Common myeloid progenitor, CD34-positive (primary cell): ENCODE measurements at regions of chr2 and their contacts with region 1.

Region 1: DNA sequence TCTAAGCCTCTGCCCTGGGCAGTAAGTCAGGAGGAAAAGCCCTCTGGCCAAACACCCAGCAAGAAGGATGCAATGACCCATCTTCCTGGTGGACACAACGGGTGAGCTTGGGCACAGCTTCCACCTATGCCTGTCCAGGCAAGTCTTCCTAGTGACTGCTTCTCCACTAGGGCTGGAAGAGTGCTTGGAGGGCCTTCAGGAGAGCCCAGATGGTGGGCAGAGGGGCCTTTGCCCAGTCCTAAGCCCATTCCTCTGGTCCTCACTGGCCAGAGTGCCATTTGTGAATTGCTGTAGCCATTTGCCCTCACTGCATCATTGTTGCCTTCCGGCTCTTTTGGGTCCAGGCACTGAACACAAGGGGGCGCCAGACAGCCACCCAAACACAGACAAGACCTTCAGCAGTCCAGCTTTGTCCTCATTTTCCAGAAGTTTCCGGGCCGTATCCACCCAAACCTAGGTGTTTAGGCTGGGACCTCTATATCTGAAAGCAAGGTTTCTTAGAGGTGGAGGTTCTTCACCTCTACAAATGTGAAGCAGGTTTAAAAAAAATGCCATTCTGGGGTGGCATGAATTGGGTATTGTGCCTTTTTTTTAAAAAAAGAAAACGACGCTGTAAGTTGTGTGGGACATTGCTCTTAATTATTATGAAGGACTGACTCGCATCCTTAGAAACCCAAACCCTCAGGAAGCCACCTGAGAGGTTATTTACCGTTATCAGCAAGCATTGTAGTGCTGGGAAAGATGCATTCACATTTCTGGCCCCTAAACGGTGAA is 29.5 kb downstream of the PAX8 start:
- DNase-seq: peak; percentile 69 to 79 (median 75)
- H3K4me3 ChIP-seq: no peak overlapping the region
- H3K27ac ChIP-seq: no peak overlapping the region
- H3K4me1 ChIP-seq: peaks cover 3 to 53% (median 18%) of the 10 kb centered on the region in 4 experiments
- H3K27me3 ChIP-seq: no peaks in the 10 kb centered on the region

Region 2: DNA sequence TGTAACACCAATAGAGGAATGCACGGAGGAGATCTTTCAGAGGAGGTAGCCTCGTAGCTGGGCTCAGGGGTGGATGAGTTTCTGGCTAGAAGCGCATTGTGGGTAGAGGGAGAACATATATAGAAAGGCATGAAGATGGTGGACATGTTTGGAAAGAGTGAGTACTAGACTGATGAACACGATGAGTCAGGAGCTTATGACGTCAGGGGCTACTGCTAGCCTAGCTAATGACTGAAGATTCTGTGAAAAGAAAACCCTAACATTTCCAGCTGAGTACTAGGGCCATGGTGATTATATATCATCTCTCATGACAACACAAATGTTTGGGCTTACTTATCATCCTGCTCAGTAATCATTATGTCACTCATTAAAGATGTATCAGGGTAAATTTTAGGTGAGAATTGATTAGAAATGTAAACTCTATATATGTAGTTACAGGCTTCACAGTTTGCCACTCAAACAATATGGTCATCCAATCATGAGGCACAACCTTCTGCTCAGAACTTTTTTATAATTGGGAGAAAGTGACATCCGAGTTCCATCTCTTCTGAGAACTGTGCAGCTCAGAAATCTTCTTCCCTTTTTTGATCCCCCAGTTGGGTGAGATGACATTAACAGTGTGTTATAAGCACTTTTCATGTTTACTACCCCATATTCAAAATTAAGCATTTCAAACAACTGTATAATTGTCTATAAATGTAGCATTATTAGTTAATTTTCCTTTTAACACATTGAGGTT is 144.0 kb before region 1 on chr2:
- CTCF ChIA-PET with region 1: no interaction called
- POLR2A ChIA-PET with region 1: no interaction called
- DNase-seq: no peak
- H3K4me3 ChIP-seq: no peak overlapping the region
- H3K27ac ChIP-seq: no peak overlapping the region
- H3K4me1 ChIP-seq: peaks cover 0 to 2% (median 0%) of the 10 kb centered on the region in 4 experiments
- H3K27me3 ChIP-seq: no peaks in the 10 kb centered on the region

Region 3: DNA sequence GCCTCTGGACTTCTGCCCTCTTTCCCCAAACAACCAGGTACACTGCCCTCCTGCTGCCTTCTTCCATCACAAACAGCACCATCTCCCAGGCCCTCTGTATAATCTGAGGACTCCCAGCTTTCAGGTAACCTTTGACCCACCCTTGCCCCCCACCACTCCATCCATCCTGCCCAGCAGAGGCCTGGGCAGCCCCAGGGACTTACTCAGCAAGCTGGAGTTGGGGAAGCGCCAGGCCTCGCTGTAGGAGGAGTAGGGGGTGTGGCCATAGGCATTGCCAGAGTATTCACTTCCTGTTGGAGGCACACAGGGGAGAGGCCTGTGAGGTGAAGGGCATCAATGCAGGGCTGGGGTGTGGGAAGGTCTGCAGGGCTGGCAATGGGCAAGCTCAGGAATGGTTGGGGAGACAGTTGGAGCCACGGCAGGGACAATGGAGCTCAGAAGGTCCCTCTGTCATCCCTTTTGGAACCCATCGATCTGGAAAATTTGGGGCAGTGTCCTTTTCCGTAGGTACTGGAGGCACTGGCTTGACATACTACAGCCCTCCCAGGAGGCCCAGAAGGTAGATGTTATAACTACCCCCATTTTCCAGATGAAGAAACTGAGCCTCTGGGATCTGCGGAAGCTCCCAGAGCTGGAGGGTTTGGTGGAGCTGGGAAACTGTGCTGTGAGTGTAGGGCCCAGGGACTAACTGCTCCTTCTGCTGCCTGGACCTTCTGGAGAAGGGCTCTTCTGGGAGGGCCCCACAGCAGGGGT is 29.1 kb before region 1 on chr2:
- CTCF ChIA-PET with region 1: interaction called, 28 read pairs
- POLR2A ChIA-PET with region 1: no interaction called
- DNase-seq: peak in 2 of 3 donors; percentile 50 to 54
- H3K4me3 ChIP-seq: no peak overlapping the region
- H3K27ac ChIP-seq: no peak overlapping the region
- H3K4me1 ChIP-seq: peaks cover 17 to 64% (median 58%) of the 10 kb centered on the region in 4 experiments
- H3K27me3 ChIP-seq: no peaks in the 10 kb centered on the region

Region 4: DNA sequence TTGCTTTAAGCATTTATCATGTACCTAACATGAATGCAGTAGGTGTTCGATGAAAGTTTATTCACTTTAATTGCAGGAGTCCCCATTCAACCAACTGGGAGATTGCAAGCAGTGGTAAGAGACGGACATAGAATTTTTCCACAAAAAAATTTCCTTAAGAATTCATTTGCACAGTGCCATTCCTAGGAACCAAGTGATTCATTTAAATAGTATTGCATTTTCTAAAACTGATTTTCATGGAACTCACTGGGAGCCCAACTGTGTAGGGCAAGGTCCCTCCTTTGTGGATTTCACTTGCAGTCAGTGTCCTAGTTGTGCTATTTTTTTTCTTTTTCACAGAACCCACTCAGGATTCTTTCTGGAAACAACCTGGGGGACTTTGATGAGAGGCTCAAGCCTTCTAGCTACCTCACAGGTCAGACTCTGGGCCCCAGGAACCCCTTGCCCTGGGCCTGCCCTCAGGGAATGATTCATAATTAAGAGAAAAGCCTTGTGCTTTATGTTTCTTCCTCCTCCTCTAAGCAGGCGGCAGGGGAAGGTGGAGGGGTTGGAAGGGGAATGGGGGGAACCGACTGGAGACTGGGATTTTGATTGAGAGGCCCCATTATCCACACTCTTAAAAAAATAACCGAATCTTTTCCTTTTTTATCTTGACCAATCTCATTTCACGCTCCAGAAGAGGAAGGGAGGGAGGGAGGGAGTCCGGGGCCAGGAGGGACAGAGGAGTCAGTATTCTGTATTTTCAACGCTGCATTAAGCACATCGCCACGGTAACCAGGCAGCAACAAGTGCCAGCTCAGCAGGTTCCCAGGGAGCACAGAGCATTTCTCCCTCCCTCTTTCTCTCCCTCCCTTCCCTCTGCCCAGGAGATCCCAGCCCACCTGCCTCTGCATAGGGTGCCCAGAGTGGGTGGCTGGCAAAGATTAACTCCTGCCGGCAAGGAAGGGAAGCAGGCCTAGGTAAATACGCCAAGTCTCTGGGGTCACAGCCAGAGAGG is 23.6 kb before region 1 on chr2:
- CTCF ChIA-PET with region 1: interaction called, 28 read pairs
- POLR2A ChIA-PET with region 1: no interaction called
- DNase-seq: peak in 2 of 3 donors; percentile 57 to 63
- H3K4me3 ChIP-seq: no peak overlapping the region
- H3K27ac ChIP-seq: no peak overlapping the region
- H3K4me1 ChIP-seq: peaks cover 23 to 61% (median 50%) of the 10 kb centered on the region in 4 experiments
- H3K27me3 ChIP-seq: no peaks in the 10 kb centered on the region

Region 5: DNA sequence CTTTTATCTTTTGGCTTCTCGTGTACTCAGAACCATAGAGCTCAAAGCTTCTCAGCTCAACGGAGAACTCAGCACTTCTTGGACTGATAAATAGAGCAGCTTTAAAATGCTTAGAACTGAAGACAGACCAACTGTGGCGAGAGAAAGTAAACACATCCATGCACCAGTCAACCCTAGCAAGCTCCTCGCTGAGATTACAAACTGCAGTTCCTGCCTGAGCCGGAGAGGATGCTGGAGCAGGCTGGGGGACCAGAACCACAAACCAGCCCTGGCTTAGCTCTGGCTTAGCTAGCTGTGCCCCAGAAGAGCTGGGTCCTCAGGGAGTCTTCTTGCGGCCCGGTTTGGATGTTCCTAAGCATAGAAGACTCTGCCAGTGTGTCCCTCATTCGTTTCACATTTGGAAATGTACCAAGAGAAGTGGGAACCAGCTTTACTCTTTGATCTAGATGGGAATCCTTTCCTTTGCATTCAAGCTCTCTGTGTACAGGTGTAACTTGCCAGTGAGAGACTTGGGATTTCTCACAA is 23.9 kb after region 1 on chr2:
- CTCF ChIA-PET with region 1: interaction called, 36 read pairs
- POLR2A ChIA-PET with region 1: no interaction called
- DNase-seq: peak in 2 of 3 donors; percentile 83 to 84
- H3K4me3 ChIP-seq: peak overlapping the region in 2 of 7 experiments; percentile 24 to 43
- H3K27ac ChIP-seq: no peak overlapping the region
- H3K4me1 ChIP-seq: peaks cover 0 to 30% (median 22%) of the 10 kb centered on the region in 4 experiments
- H3K27me3 ChIP-seq: peaks cover 20 to 75% (median 49%) of the 10 kb centered on the region in 5 experiments

Region 6: DNA sequence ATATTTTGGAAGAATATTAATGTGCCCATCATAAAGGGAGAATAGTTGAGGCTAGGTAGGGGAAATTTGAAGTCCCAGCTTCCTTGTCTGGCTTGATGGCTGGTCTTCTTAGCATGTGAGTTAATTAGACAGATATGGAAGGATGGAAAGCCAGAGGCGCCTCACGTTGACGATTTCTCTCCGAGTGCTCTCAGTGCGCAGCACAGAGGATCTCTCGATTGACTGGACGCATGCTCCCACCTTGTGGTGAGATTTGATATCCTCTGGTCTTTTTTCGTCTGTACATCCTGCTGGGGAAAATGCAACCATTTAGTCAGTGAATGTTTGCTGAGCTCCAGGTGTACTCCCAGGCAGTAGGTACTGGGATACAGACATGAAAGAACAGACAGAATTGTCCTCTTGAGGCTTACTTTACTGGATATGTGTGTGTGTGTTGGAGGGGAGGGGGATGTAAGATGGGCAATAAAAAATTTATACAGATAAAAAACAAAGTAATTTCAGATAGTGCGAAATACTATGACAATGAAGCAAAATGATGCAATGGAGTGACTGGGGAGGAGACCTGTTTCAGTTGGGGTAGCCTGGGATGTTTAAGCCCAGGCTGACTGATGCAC is 121.4 kb after region 1 on chr2:
- CTCF ChIA-PET with region 1: interaction called, 33 read pairs
- POLR2A ChIA-PET with region 1: no interaction called
- DNase-seq: peak; percentile 60 to 84 (median 84)
- H3K4me3 ChIP-seq: no peak overlapping the region
- H3K27ac ChIP-seq: no peak overlapping the region
- H3K4me1 ChIP-seq: peaks cover 2 to 20% (median 18%) of the 10 kb centered on the region in 4 experiments
- H3K27me3 ChIP-seq: no peaks in the 10 kb centered on the region

Region 7: GRCh38 chr2:113390124-113390849 is 141.1 kb after region 1 on chr2:
- CTCF ChIA-PET with region 1: interaction called, 13 read pairs
- POLR2A ChIA-PET with region 1: no interaction called
- DNase-seq: peak; percentile 91 to 98 (median 95)
- H3K4me3 ChIP-seq: peak overlapping the region in 6 of 7 experiments; percentile 47 to 76 (median 64)
- H3K27ac ChIP-seq: peak overlapping the region; percentile 74 to 87
- H3K4me1 ChIP-seq: peaks cover 0 to 11% (median 8%) of the 10 kb centered on the region in 4 experiments
- H3K27me3 ChIP-seq: no peaks in the 10 kb centered on the region